Activated B cell treated with CpG ODN at 0.5 μM for 24 hours (primary cell): ENCODE measurements at regions of chr3 and their contacts with region 1.

Region 1: DNA sequence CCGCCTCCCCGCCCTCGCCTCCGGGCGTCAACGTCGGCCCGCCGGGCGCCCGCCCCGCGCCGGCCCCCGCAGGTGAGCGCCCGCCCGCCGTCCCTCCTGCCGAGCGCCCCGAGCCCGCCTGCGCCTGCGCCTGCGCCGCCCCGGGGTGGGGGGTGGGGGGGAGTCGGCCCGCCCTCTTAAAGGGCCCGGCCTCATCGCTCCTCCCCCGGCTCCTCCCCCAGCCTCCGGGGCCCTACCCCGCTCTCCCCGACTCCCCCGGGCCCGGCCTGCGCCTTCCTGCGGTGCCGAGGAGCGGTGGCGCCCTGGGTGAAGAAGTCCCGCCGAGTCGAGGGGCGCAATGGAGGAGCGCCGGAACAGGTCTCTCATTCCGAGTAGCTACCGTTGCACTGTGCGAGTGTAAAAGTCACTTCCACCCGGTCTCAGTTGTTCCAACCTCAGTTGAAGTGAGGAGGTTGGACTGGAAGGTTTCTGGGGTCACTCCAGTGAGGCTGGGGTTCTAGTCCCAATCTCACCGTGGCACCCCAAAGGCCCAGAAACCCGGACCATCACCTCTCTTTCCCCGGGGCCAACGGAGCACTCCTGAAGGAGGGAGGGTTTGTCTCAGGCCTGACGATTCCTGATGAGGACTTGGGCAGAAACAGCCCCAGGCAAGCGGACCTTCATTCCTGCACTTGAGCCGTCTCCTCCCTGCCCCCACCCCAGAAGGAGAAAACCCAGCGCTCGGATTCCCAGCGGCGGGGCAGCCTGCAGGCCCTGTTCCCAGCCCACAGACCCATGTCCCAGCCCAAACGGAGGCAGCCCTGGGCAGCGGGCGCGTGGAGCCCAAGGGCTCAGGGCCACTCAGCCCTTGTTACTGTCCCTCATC is 1.5 kb upstream of the TNK2 start:
- DNase-seq: peak; percentile 88
- ATAC-seq: peak; percentile 65
- H3K4me3 Mint-ChIP-seq: peak overlapping the region; percentile 78
- H3K27ac Mint-ChIP-seq: peak overlapping the region; percentile 78
- H3K4me1 Mint-ChIP-seq: peaks cover 44% of the 10 kb centered on the region
- H3K27me3 Mint-ChIP-seq: no peaks in the 10 kb centered on the region
- CTCF ChIP-seq: no peak

Region 2: GRCh38 chr3:194486540-194487288 is 1423.2 kb before region 1 on chr3 and contains the start of gene ATP13A3:
- CTCF ChIA-PET with region 1: no interaction called
- POLR2A ChIA-PET with region 1: no interaction called
- intact Hi-C with region 1: loop called (anchors 5 kb)
- DNase-seq: peak; percentile 86
- ATAC-seq: peak; percentile 75
- H3K4me3 Mint-ChIP-seq: peak within 1 kb of the TSS; percentile 91
- H3K27ac Mint-ChIP-seq: peak within 1 kb of the TSS; percentile 88
- H3K4me1 Mint-ChIP-seq: peaks cover 63% of the 10 kb centered on the region
- H3K27me3 Mint-ChIP-seq: no peaks in the 10 kb centered on the region
- CTCF ChIP-seq: no peak
- total RNA-seq, gene ATP13A3: 79.8 and 91.9 TPM in 2 replicates

Region 3: GRCh38 chr3:195542698-195543499 is 367.0 kb before region 1 on chr3 and contains the start of gene PPP1R2:
- CTCF ChIA-PET with region 1: no interaction called
- POLR2A ChIA-PET with region 1: interaction called, 13 read pairs
- intact Hi-C with region 1: loop called (anchors 5 kb)
- DNase-seq: peak; percentile 95
- ATAC-seq: peak; percentile 84
- H3K4me3 Mint-ChIP-seq: peak within 1 kb of the TSS; percentile 91
- H3K27ac Mint-ChIP-seq: peak within 1 kb of the TSS; percentile 92
- H3K4me1 Mint-ChIP-seq: peaks cover 76% of the 10 kb centered on the region
- H3K27me3 Mint-ChIP-seq: no peaks in the 10 kb centered on the region
- CTCF ChIP-seq: no peak
- total RNA-seq, gene PPP1R2: 62.5 and 64.1 TPM in 2 replicates

Region 4: DNA sequence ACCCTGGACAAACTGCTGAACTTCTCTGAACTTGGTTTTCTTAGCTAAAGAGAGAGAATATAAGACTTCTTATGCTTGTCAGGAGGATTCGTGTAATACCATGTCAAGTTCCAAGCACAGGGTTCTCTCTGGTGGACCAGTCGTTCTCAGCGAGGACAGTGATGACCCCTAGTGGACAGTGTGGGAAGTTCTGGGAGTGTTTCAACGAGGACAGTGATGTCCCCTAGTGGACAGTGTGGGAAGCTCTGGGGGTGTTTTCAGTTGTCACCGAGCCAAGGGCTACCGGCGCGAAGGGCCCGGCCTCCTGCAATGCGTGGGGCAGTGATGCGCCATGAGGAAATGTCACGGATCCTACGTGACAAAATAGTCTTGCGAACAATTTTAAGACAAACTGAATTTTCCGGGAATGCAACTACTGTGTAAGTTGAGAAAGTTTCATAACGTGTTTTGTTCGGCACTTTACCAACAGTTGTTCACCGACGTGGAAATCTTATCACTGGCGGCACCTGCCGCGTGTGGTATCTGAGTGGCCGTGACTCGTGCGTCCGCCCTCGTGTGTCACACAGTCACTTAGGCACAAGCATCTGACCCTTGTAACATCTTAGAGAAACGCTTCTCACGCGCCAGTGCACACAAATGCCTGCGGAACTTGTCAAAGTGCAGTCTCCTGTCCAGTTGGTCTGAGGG is 58.9 kb before region 1 on chr3:
- CTCF ChIA-PET with region 1: interaction called, 70 read pairs
- POLR2A ChIA-PET with region 1: no interaction called
- intact Hi-C with region 1: no loop called
- DNase-seq: peak; percentile 61
- ATAC-seq: peak; percentile 100
- H3K4me3 Mint-ChIP-seq: peak overlapping the region; percentile 35
- H3K27ac Mint-ChIP-seq: no peak overlapping the region
- H3K4me1 Mint-ChIP-seq: peaks cover 10% of the 10 kb centered on the region
- H3K27me3 Mint-ChIP-seq: peaks cover 11% of the 10 kb centered on the region
- CTCF ChIP-seq: peak; percentile 100

Region 5: DNA sequence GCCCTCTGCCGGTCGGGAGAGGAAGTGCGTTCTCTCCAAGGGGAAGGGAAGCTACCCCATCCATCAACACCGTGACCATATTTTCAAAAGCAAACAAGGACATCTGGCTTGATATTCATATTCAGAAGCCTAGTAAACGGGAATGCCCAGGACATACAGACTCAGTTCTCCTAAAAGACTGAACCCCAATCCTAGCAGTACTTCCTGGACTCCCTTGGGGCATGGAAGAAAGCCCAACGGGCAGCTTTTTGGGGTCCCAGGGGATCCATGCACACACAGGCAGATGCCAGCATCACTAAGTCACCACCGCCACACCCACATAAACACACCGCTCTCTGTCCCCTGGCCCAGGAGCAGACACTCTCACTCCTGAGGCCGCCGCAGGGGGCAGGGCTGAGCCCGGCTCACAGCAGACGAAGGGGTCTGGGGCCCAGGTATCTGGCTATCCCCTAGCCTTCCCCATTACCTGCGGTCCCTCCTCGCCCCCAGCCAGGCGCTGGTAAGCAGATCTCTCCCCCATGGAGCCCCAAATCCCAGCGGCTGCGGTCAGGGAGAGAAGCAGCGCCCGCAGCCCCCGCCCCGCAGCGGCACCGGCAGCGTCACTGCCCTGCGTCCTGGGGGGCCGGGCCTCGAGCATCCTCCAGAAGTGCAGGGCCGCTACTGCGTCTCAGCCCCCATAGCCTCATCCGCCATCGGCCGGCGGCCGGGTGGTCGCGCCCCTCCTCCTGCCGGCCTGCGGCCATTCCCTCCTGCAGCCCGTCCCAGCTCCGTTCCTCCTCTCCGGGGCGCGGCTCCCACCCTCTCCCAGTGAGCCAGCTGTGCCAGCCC is 14.9 kb before region 1 on chr3:
- CTCF ChIA-PET with region 1: interaction called, 103 read pairs
- POLR2A ChIA-PET with region 1: interaction called, 217 read pairs
- intact Hi-C with region 1: loop called (anchors 1 kb)
- DNase-seq: peak; percentile 72
- ATAC-seq: peak; percentile 72
- H3K4me3 Mint-ChIP-seq: peak overlapping the region; percentile 88
- H3K27ac Mint-ChIP-seq: peak overlapping the region; percentile 88
- H3K4me1 Mint-ChIP-seq: peaks cover 57% of the 10 kb centered on the region
- H3K27me3 Mint-ChIP-seq: no peaks in the 10 kb centered on the region
- CTCF ChIP-seq: peak; percentile 60

Region 6: DNA sequence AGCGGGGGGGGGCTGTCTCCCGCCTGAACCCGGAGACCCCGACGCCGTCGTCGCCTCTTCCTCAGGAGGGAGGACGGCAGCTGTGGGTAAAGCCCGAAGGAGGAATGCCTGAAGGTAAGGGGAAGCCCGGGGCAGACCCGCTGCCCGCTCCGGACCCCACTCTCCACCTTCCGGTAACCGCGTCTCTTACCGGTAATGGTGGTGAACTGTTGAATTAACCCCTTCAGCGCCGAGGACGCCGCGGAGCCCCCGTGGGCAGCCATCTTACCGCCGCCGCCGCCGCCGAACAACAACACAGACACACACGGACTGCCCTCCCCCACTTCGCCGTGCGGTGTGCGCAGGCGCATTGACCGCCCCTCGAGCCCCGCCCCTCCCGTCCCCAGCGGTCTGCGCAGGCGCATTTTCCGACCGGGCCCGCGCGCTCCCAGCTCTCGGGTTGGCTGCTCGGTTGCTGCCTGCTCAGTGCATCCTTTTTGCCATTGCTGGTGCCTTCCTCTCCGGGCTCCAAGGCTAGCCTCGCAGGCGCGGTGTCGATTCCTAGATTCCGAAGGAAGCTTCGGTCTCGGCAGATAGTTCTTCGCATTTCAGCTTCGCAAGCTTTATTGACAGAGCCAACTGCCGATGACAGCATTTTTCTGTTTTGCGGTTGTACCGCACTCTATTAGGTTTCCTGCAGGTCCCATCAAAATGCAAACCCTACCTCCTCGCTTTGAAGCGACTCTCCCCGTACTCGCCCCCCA is 522.4 kb after region 1 on chr3 and contains the start of gene UBXN7:
- CTCF ChIA-PET with region 1: no interaction called
- POLR2A ChIA-PET with region 1: no interaction called
- intact Hi-C with region 1: loop called (anchors 5 kb)
- DNase-seq: peak; percentile 92
- ATAC-seq: peak; percentile 81
- H3K4me3 Mint-ChIP-seq: peak within 1 kb of the TSS; percentile 96
- H3K27ac Mint-ChIP-seq: peak within 1 kb of the TSS; percentile 80
- H3K4me1 Mint-ChIP-seq: peaks cover 22% of the 10 kb centered on the region
- H3K27me3 Mint-ChIP-seq: no peaks in the 10 kb centered on the region
- CTCF ChIP-seq: no peak
- total RNA-seq, gene UBXN7: 60.8 and 66.5 TPM in 2 replicates